Pancreas (tissue), 10 donors: ENCODE measurements at regions of chr15 and their contacts with region 1.

Region 1: DNA sequence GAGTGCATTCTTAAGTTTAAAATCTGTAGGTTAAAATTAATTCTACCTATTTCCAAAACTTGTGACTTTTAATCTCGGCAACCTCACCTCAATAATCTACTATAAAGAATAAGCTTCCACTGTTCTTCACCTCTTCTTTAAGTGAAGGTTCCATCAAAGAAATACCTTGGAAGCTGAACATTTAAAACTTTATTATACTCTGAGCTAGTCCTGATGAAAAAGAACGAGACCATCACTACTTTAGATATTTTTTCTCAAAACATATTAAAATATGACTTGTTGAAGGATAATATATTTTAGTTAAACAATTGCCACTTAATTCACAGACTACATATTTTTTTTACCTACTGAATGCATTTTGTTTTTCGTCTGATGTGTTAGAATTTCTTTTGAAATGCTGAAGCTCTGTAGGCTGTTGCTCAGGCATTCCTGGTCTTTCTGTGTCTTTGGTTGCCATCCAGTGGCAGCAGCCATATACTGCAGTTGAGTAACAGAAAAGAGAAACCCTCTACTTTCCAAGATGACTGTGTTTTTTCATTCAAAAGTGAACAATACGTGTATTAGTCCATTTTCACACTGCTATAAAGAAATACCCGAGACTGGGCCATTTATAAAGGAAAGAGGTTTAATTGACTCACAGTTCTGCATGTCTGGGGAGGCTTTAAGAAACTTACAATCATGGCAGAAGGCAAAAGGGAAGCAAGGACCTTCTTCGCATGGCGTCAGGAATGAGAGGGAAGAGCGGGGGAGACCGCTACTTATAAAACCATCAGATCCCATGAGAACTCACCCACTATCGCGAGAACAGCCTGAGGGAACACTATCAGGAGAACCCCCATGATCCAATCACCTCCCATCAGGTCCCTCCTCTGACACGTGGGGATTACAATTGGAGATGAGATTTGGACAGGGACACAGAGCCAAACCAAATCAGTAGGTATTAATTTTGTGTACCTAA is 4.5 kb upstream of the GOLGA8B start:
- DNase-seq: peak in 4 of 6 donors; percentile 42 to 72 (median 50)
- ATAC-seq: peak; percentile 41 to 83 (median 74)
- H3K4me3 ChIP-seq: peak overlapping the region in 2 of 4 donors; percentile 13 to 21
- H3K27ac ChIP-seq: no peak overlapping the region
- H3K4me1 ChIP-seq: peaks cover 0 to 3% (median 0%) of the 10 kb centered on the region in 3 donors
- H3K27me3 ChIP-seq: no peaks in the 10 kb centered on the region
- CTCF ChIP-seq: peak; percentile 41 to 65 (median 60)

Region 2: GRCh38 chr15:34342737-34343575 is 245.0 kb before region 1 on chr15 and contains the starts of genes NOP10 and NUTM1:
- intact Hi-C with region 1: loop called in 1 of 3 experiments (anchors 5 kb)
- DNase-seq: peak; percentile 84 to 97 (median 89)
- ATAC-seq: peak; percentile 96 to 98 (median 98)
- H3K4me3 ChIP-seq: peak within 1 kb of the TSS; percentile 47 to 85 (median 54)
- H3K27ac ChIP-seq: peak within 1 kb of the TSS; percentile 61 to 89 (median 87)
- H3K4me1 ChIP-seq: peaks cover 0 to 9% (median 0%) of the 10 kb centered on the region in 3 donors
- H3K27me3 ChIP-seq: no peaks in the 10 kb centered on the region
- CTCF ChIP-seq: peak; percentile 84 to 93 (median 91)
- total RNA-seq, gene NOP10: 23.9 to 53.6 (median 33.8) TPM
- total RNA-seq, gene NUTM1: not detected

Region 3: DNA sequence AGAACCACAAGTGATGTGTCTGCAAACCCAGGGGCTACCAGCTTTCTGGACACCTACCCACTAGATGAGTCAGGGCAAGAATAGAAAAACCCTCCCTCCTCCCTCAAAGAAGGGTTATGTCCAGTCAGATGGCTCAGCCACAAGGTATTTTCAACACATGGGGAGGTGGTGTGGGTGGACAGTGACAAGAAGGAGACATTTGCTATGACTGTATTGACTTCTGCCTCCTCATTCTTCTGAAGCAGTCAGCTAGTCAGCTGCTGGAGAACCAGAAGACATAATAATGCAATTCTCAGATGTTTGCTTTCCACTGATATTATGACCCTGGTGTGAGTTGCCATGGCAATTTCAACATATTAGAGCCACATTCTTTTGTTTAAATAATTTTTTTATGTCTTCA is 62.2 kb after region 1 on chr15:
- intact Hi-C with region 1: no loop called
- DNase-seq: no peak
- ATAC-seq: peak in 1 of 4 donors; percentile 30
- H3K4me3 ChIP-seq: no peak overlapping the region
- H3K27ac ChIP-seq: no peak overlapping the region
- H3K4me1 ChIP-seq: no peaks in the 10 kb centered on the region
- H3K27me3 ChIP-seq: no peaks in the 10 kb centered on the region
- CTCF ChIP-seq: no peak